PC-9 (cell line): ENCODE measurements at regions of chr4 and their contacts with region 1.

Region 1: DNA sequence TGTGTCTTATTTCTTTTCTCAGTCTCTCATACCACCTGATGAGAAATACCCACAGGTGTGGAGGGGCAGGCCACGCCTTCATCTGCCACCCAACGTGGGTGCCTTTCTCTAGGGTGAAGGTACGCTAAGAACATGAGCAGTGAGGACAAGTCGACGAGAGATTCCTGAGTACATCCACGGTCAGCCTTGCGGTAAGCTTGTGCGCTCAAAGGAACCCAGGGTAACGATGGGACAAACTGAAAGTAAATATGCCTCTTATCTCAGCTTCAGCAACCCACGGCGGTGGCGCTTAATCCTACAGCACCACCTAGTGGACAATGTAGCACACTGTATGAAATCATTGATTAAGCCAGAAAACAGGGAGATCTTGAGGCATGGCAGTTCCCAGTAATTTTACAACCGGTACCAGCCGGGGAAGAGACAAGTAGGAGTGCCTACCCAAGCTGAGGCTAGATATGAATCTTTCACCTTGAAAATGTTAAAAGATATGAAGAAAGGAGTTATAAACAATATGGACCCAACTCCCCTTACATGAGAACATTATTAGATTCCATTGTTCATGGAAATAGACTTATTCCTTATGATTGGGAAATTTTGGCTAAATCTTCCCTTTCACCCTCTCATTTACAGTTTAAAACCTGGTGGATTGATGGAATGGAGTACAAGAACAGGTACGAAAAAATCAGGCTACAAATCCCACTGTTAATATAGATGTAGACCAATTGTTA is 63.0 kb downstream of the ZNF732 start:
- DNase-seq: peak; percentile 34 to 51
- H3K4me3 ChIP-seq: peak overlapping the region; percentile 40; the same call in 1 of the 2 replicates
- H3K27ac ChIP-seq: no peak overlapping the region
- H3K4me1 ChIP-seq: no peaks in the 10 kb centered on the region
- H3K27me3 ChIP-seq: no peaks in the 10 kb centered on the region
- CTCF ChIP-seq: peak; percentile 59

Region 2: DNA sequence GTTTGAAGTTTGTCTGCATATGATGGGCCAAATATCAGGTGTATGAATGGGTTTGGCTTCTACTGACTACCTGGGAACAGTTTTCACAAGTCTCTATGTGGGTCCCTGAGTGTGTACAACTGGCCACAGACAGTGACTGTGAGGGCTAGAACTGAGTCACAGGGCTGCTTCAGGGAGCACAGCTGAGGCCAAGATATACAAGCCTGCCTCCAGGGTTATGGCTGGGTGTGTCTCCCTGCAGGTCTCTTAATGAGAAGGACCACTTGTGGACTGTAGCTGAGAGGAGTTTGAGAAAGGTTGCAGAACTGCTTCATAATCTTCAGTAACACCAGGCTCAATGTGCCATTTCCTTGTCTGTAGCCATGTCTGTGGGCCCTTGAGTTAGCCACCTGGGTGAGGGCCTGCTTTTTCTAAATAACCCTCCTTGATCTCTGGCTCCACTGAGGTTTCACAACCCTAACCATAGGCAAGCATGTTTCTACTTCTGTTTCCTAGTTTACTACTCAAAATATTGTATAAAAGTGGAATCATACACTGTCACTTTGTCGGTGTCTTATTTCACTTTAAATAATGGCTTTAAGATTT is 18.3 kb before region 1 on chr4:
- CTCF ChIA-PET with region 1: no interaction called
- POLR2A ChIA-PET with region 1: no interaction called
- intact Hi-C with region 1: no loop called
- DNase-seq: no peak
- H3K4me3 ChIP-seq: no peak overlapping the region
- H3K27ac ChIP-seq: no peak overlapping the region
- H3K4me1 ChIP-seq: no peaks in the 10 kb centered on the region
- H3K27me3 ChIP-seq: no peaks in the 10 kb centered on the region
- CTCF ChIP-seq: no peak

Region 3: DNA sequence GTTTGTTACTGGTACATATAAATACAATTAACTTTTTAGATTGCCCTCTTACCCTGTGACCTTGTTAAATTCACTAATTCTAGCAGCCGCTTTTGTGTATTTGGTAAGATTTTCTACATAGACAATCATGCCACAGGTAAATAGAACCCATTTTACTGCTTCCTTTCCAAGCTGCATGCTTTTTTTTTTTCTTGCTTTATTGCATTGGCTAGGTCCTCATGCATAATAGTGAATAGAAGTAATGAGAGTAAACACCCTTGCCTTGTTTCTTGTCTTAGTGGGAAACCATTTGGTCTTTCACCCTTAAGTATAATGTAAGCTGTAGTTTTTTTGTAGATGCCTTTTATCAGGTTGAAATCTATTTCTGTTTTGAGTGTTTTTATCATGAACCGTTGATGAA is 341.5 kb after region 1 on chr4:
- CTCF ChIA-PET with region 1: no interaction called
- POLR2A ChIA-PET with region 1: interaction called, 16 read pairs
- intact Hi-C with region 1: no loop called
- DNase-seq: no peak
- H3K4me3 ChIP-seq: no peak overlapping the region
- H3K27ac ChIP-seq: no peak overlapping the region
- H3K4me1 ChIP-seq: no peaks in the 10 kb centered on the region
- H3K27me3 ChIP-seq: peaks cover 75% of the 10 kb centered on the region
- CTCF ChIP-seq: no peak

Region 4: DNA sequence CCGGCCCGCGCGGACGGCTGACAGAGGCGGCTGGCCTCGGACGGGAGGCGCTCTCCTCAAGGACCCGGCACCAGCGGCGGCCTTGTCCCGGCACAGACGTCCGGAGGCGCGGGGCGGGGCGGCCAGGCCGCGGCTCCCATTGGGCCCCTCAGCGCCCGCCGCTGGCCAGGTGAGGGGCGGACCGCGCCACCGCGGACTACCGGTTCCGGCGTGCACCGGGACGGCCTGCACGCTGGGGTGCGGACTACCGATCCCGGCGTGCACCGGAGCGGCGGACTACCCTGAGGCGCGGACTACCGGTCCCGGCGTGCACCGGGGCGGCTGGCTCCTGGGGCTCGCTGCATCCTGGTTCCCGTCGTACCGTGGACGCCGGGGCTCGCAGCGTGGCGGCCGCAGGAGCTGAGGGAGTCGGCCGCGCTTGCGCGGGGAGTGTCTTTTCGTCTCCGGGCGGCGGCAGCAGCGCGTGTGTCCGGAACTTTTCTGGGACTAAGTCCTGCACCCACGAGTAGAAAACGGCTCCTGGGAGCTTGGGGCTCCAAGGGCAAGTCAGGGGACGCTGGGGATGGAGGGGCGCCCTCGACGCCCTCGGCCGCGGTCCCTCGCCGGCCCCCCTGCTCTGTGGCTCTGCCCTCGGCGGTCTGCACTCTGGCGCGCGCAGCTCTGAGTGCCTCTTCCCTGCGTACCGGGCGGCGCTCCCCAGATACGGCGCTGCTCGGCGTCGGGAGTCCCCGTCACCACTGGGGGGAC is 1613.9 kb after region 1 on chr4 and contains the start of gene LETM1:
- CTCF ChIA-PET with region 1: no interaction called
- POLR2A ChIA-PET with region 1: no interaction called
- intact Hi-C with region 1: no loop called
- DNase-seq: peak; percentile 80 to 97
- H3K4me3 ChIP-seq: peak within 1 kb of the TSS; percentile 82
- H3K27ac ChIP-seq: peak within 1 kb of the TSS; percentile 47; the same call in 1 of the 2 replicates
- H3K4me1 ChIP-seq: peaks cover 36% of the 10 kb centered on the region
- H3K27me3 ChIP-seq: no peaks in the 10 kb centered on the region
- CTCF ChIP-seq: no peak
- total RNA-seq, gene LETM1: 44.5 and 58.9 TPM in 2 replicates